ENCODE measurements at regions of chr11 and their contacts with region 1.

Region 1: DNA sequence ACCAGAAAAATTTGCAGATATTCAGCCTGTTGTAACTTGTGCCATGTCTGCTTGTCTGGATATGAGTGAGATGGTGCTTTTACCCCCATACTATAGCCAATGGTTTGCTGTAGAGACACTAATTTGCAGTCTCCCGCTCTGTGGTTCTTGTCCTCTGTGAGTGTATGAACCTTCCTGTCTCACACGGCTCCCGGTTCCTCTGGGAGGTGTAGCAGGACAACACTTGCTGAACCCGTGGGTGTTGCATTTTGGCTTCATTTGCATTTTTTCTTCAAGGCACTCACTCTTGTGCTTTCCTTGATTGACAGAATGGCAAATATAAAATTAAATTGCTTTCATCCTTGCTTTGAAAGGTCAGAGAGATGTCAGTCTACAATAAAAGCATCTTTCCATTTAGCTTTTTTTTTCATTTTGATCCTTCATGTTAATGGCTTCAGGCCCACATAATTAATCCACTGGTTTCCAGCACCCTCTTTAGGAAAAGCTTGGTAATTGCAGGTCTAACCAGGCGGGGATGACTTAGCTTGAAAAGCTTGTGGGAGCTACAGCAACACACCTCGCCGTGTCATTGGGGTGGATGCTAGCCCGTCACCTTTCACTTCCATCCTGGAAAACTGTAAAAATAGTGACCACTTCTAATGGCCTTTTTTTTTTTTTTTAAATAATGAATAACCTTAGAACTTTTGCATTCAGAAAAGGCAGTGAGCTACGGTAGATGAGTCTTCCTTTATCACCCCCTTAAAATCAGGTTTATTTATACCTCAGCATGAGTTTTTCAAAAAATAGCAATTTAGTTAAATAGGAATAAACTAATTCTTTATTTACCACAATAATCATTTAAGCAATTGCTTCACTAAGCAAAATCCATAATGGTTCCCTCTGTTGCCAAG is 27.4 kb upstream of the ST14 start:
- DNase-seq: no peak
- ATAC-seq: peak; percentile 87
- H3K4me3 Mint-ChIP-seq: no peak overlapping the region
- H3K27ac Mint-ChIP-seq: no peak overlapping the region
- H3K4me1 Mint-ChIP-seq: peaks cover 19% of the 10 kb centered on the region
- H3K27me3 Mint-ChIP-seq: no peaks in the 10 kb centered on the region
- CTCF ChIP-seq: peak; percentile 56

Region 2: DNA sequence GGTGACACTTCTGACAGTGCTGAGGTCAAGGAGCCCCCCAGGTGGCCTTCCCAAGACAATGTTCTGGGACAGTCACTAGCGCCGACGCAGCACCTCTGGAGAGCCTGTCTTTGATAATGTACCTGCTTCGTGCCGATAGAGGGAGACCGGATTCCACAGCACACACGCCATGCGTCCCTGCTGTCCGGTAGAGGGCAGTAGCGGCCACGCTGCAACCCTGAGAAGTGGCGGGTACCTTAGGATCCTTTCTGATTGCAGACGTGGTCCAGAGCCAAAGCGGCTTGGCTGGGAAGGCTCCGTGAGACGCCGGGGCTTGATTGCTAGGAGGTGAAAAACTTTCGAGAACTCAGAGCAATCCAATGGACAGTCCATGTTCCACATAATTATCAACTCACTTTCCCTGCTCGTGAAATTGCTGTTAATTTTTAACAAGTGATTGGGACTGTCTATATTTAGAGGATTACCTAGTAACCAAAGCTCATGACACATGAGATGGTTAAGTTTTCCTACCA is 768.0 kb before region 1 on chr11:
- CTCF ChIA-PET with region 1: no interaction called
- POLR2A ChIA-PET with region 1: no interaction called
- intact Hi-C with region 1: loop called (anchors 5 kb)
- DNase-seq: peak; percentile 40
- ATAC-seq: peak; percentile 76
- H3K4me3 Mint-ChIP-seq: no peak overlapping the region
- H3K27ac Mint-ChIP-seq: no peak overlapping the region
- H3K4me1 Mint-ChIP-seq: no peaks in the 10 kb centered on the region
- H3K27me3 Mint-ChIP-seq: peaks cover 25% of the 10 kb centered on the region
- CTCF ChIP-seq: peak; percentile 56

Region 3: GRCh38 chr11:129766898-129767604 is 365.2 kb before region 1 on chr11:
- CTCF ChIA-PET with region 1: no interaction called
- POLR2A ChIA-PET with region 1: no interaction called
- intact Hi-C with region 1: loop called (anchors 5 kb)
- DNase-seq: no peak
- ATAC-seq: no peak
- H3K4me3 Mint-ChIP-seq: no peak overlapping the region
- H3K27ac Mint-ChIP-seq: no peak overlapping the region
- H3K4me1 Mint-ChIP-seq: no peaks in the 10 kb centered on the region
- H3K27me3 Mint-ChIP-seq: peaks cover 7% of the 10 kb centered on the region
- CTCF ChIP-seq: no peak

Region 4: DNA sequence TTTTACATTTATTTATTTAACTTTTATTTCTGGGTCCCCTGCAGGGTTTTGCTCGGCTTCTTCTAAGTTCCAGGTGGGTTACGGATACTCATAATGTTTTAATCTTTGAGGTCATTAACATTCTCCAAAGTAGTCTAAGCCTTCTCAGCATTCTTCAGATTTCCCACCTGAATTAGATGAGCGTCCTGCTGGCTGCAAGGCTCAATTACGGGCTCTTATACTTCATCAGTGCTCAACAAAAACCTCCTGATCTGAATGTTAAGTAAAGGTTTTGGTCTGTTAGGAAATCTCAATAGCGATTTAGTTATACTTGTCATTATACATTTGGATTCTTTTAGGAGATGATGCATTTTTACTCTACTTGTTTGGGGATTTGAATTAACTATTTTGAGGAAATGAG is 209.5 kb before region 1 on chr11:
- CTCF ChIA-PET with region 1: interaction called, 218 read pairs
- POLR2A ChIA-PET with region 1: interaction called, 3 read pairs
- intact Hi-C with region 1: loop called (anchors 1 kb)
- DNase-seq: no peak
- ATAC-seq: no peak
- H3K4me3 Mint-ChIP-seq: no peak overlapping the region
- H3K27ac Mint-ChIP-seq: no peak overlapping the region
- H3K4me1 Mint-ChIP-seq: peaks cover 4% of the 10 kb centered on the region
- H3K27me3 Mint-ChIP-seq: no peaks in the 10 kb centered on the region
- CTCF ChIP-seq: no peak

Region 5: DNA sequence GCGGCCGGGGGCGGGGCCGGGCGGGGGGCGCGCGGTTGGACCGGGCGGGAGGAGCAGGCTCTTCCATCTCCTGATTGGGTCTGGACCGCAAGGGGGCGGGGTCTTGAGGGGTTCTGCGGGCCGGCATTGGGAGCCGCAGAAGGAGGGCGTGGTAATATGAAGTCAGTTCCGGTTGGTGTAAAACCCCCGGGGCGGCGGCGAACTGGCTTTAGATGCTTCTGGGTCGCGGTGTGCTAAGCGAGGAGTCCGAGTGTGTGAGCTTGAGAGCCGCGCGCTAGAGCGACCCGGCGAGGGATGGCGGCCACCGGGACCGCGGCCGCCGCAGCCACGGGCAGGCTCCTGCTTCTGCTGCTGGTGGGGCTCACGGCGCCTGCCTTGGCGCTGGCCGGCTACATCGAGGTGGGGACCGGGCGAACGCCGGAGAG is 62.5 kb before region 1 on chr11 and contains the start of gene APLP2:
- CTCF ChIA-PET with region 1: interaction called, 18 read pairs
- POLR2A ChIA-PET with region 1: interaction called, 11 read pairs
- intact Hi-C with region 1: loop called (anchors 1 kb)
- DNase-seq: peak; percentile 92
- ATAC-seq: peak; percentile 94
- H3K4me3 Mint-ChIP-seq: peak within 1 kb of the TSS; percentile 92
- H3K27ac Mint-ChIP-seq: peak within 1 kb of the TSS; percentile 83
- H3K4me1 Mint-ChIP-seq: peaks cover 36% of the 10 kb centered on the region
- H3K27me3 Mint-ChIP-seq: peaks cover 8% of the 10 kb centered on the region
- CTCF ChIP-seq: no peak
- total RNA-seq, gene APLP2: 47.7 and 50.8 TPM in 2 replicates

Region 6: DNA sequence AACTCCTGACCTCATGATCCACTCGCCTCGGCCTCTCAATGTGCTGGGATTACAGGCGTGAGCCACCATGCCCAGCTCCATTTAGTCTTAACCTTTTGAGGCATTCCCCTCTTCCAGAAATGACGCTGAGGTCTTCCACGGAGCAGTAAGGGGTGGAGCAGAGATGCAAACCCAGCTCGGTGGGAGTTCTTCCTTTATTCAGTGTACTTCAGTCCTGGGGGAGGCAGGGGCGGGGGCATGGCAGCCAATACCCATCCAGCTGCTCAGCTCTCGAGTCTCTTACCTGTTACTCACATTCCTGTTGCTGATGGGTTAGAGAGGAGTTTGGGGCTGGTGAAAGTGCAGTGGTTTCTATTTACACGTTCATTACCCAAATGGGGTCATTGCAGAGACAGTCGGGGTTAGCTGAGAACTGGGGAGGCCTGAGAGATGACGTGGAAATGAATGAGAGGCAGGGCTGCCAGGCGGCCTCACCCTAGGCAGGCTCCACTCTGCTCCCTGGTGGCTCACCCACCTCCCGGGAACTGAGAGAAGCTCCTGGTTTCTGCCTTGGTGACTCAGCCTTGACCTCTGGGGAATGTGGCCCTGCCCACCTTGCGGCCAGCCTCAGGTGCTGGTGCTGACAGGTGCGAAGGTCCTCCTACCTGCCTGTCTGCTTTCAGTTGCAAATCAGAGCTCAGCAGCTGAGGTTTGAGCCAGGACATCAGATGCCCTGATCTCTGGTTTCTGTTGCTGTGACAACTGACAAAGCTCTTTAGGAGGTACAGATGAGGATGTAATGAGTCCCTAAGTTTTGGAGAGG is 14.0 kb after region 1 on chr11:
- CTCF ChIA-PET with region 1: interaction called, 22 read pairs
- POLR2A ChIA-PET with region 1: interaction called, 3 read pairs
- intact Hi-C with region 1: no loop called
- DNase-seq: no peak
- ATAC-seq: peak; percentile 25
- H3K4me3 Mint-ChIP-seq: no peak overlapping the region
- H3K27ac Mint-ChIP-seq: peak overlapping the region; percentile 80
- H3K4me1 Mint-ChIP-seq: peaks cover 45% of the 10 kb centered on the region
- H3K27me3 Mint-ChIP-seq: no peaks in the 10 kb centered on the region
- CTCF ChIP-seq: no peak

Region 7: DNA sequence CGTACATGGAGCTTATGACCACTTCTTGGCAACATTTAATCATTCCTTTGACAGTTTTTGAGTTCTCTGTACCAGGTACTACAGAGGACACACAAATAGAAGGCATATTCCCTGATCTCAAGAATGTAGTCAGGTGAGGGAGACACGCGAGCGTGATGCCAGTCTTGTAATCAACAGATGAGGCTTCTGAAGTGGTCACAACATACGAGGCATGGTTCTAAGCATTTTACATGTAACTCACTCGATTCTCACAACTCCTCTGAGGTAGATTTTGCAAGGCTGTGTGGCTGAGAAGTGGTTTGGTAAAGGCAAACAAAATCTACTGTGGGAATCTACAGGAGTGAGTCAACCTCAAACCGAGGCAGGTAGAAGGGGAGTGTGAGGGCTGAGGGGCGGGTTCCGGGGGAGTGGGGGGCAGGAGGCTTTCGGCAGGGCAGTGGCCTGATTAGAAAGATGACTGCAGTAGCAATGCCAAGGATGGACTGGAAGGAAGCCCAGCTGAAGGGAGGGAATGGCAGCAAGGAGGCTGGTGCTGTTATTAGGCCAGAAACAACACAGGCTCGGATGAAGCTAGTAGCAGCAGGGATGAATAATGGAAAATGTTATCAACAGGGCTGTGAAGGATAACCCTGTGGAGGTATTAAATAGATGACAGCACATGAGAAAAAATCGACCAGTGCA is 91.2 kb after region 1 on chr11:
- CTCF ChIA-PET with region 1: no interaction called
- POLR2A ChIA-PET with region 1: no interaction called
- intact Hi-C with region 1: no loop called
- DNase-seq: no peak
- ATAC-seq: no peak
- H3K4me3 Mint-ChIP-seq: no peak overlapping the region
- H3K27ac Mint-ChIP-seq: no peak overlapping the region
- H3K4me1 Mint-ChIP-seq: peaks cover 7% of the 10 kb centered on the region
- H3K27me3 Mint-ChIP-seq: no peaks in the 10 kb centered on the region
- CTCF ChIP-seq: no peak

Measured in activated B cell treated with CpG ODN at 0.5 μM for 24 hours (primary cell).